H1 (cell line): ENCODE measurements at regions of chr10 and their contacts with region 1.

Region 1: GRCh38 chr10:97572214-97572989 is at the start of gene ANKRD2:
- DNase-seq: peak; percentile 59 to 85
- H3K4me3 ChIP-seq: no peak within 1 kb of the TSS
- H3K27ac ChIP-seq: no peak within 1 kb of the TSS
- H3K4me1 ChIP-seq: peaks cover 2 to 6% (median 4%) of the 10 kb centered on the region in 4 experiments; a peak in 3 of 7 replicates
- H3K27me3 ChIP-seq: no peaks in the 10 kb centered on the region
- CTCF ChIP-seq: peak; percentile 96 to 99 (median 98)
- EP300 ChIP-seq: no peak
- POLR2A ChIP-seq: no peak
- RAD21 ChIP-seq: peak; percentile 82 to 89
- total RNA-seq, gene ANKRD2: not detected in 2 replicates

Region 2: DNA sequence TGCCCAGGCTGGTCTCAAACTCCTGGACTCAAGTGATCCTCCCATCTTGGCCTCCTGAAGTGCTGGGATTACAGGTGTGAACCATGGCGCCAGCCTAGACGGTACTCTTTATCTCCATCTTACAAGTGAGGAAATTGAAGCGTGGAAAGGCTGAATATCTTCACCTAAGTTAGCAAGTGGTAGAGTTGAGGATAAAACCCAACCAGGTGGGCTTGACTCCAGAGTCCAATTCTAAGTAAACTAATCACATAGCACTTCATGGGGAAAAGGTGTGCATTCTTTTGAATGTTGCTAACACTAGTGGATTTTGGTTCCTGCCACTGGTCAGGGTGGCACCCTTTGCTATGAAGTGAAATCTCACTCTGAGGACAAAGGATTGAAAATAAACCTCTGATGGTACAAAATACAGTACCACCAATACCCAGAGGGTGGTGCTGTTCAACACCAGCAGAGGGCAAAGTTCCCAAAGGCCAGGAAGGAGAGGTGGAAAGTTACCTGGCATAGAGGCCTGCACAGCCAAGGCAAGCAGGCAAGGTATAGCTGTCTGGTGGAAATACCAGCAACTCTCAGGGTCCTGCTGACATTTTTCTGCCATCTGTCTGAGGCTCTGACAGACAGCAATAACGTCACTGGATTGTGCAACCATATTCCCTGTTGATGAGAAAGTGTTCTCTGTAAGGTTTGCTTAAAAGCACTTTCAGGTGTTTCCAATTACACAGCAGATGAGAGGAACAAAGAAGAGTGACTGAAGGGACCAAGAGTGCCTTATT is 108.9 kb before region 1 on chr10:
- CTCF ChIA-PET with region 1: interaction called, 13 read pairs
- POLR2A ChIA-PET with region 1: no interaction called
- DNase-seq: peak in 1 of 2 experiments; percentile 77
- H3K4me3 ChIP-seq: no peak overlapping the region
- H3K27ac ChIP-seq: no peak overlapping the region
- H3K4me1 ChIP-seq: no peaks in the 10 kb centered on the region
- H3K27me3 ChIP-seq: no peaks in the 10 kb centered on the region
- CTCF ChIP-seq: peak; percentile 63 to 96 (median 95)
- EP300 ChIP-seq: no peak
- POLR2A ChIP-seq: peak in 1 of 2 experiments; percentile 34; a peak in 1 of 3 replicates
- RAD21 ChIP-seq: peak; percentile 87 to 91

Region 3: GRCh38 chr10:97490592-97490991 is 81.8 kb before region 1 on chr10:
- CTCF ChIA-PET with region 1: no interaction called
- POLR2A ChIA-PET with region 1: no interaction called
- DNase-seq: no peak
- H3K4me3 ChIP-seq: no peak overlapping the region
- H3K27ac ChIP-seq: no peak overlapping the region
- H3K4me1 ChIP-seq: peaks cover 5 to 10% (median 7%) of the 10 kb centered on the region in 4 experiments; a peak in 4 of 7 replicates
- H3K27me3 ChIP-seq: no peaks in the 10 kb centered on the region
- CTCF ChIP-seq: no peak
- EP300 ChIP-seq: no peak
- POLR2A ChIP-seq: no peak
- RAD21 ChIP-seq: no peak

Region 4: GRCh38 chr10:97543025-97543575 is 29.3 kb before region 1 on chr10:
- CTCF ChIA-PET with region 1: interaction called, 169 read pairs
- POLR2A ChIA-PET with region 1: interaction called, 3 read pairs
- DNase-seq: no peak
- H3K4me3 ChIP-seq: no peak overlapping the region
- H3K27ac ChIP-seq: no peak overlapping the region
- H3K4me1 ChIP-seq: peaks cover 0 to 21% (median 8%) of the 10 kb centered on the region in 4 experiments; a peak in 6 of 7 replicates
- H3K27me3 ChIP-seq: no peaks in the 10 kb centered on the region
- CTCF ChIP-seq: no peak
- EP300 ChIP-seq: no peak
- POLR2A ChIP-seq: no peak
- RAD21 ChIP-seq: no peak

Region 5: GRCh38 chr10:97584060-97584797 is 11.8 kb after region 1 on chr10 and contains the start of gene HOGA1:
- CTCF ChIA-PET with region 1: interaction called, 108 read pairs
- POLR2A ChIA-PET with region 1: interaction called, 8 read pairs
- DNase-seq: peak in 1 of 2 experiments; percentile 65
- H3K4me3 ChIP-seq: no peak within 1 kb of the TSS
- H3K27ac ChIP-seq: no peak within 1 kb of the TSS
- H3K4me1 ChIP-seq: peaks cover 0 to 6% (median 2%) of the 10 kb centered on the region in 4 experiments; a peak in 2 of 7 replicates
- H3K27me3 ChIP-seq: no peaks in the 10 kb centered on the region
- CTCF ChIP-seq: no peak
- EP300 ChIP-seq: no peak
- POLR2A ChIP-seq: no peak
- RAD21 ChIP-seq: no peak
- total RNA-seq, gene HOGA1: 0.28 and 0.29 TPM in 2 replicates

Region 6: DNA sequence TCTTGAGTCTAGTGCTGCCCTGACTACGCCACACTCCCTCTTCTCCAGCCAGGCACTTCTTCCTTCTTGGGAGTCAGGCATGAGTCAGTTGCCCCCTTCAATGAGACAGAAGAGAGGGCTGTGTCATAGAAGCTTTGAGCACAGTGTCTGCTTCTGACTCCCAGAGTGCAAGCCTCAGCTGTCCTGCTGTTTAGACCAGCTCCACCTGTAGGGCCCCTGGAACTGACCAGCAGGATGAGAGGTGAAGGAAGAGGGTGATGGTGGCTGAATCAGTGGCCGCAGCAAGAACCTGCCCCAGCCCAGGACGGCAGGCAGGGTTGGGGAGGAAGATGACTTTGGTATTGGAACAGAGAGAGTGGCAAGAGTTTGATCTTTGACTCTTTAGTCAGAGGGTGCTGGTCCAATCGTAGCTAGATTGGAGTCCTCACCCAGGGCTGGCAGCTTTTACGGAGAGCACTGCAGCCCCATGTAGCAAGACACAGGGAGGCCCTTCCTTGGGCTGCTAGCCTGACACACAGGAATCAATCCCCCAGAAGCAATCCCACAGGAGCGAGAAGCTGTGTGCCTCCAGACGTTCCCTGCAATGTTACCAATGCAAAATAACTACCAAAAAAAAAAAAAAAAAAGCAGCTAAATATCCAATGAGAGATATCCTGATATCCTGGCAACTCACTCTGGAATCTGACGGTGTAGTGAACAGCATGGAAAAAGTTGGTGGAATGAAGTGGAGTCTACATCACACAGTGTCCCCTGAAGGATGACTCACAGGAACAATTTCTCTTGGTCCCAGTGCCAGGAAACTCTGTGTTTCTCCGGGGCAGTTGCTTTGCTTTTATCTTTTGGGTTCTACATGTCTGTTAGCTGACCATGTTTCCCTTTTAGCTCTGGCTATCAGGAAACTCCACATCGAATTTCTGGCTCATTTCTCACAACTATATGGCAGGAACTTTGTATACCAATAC is 24.0 kb after region 1 on chr10:
- CTCF ChIA-PET with region 1: interaction called, 20 read pairs
- POLR2A ChIA-PET with region 1: no interaction called
- DNase-seq: no peak
- H3K4me3 ChIP-seq: no peak overlapping the region
- H3K27ac ChIP-seq: no peak overlapping the region
- H3K4me1 ChIP-seq: no peaks in the 10 kb centered on the region
- H3K27me3 ChIP-seq: no peaks in the 10 kb centered on the region
- CTCF ChIP-seq: no peak
- EP300 ChIP-seq: no peak
- POLR2A ChIP-seq: no peak
- RAD21 ChIP-seq: no peak